ENCODE measurements at regions of chr19 and their contacts with region 1.

Region 1: DNA sequence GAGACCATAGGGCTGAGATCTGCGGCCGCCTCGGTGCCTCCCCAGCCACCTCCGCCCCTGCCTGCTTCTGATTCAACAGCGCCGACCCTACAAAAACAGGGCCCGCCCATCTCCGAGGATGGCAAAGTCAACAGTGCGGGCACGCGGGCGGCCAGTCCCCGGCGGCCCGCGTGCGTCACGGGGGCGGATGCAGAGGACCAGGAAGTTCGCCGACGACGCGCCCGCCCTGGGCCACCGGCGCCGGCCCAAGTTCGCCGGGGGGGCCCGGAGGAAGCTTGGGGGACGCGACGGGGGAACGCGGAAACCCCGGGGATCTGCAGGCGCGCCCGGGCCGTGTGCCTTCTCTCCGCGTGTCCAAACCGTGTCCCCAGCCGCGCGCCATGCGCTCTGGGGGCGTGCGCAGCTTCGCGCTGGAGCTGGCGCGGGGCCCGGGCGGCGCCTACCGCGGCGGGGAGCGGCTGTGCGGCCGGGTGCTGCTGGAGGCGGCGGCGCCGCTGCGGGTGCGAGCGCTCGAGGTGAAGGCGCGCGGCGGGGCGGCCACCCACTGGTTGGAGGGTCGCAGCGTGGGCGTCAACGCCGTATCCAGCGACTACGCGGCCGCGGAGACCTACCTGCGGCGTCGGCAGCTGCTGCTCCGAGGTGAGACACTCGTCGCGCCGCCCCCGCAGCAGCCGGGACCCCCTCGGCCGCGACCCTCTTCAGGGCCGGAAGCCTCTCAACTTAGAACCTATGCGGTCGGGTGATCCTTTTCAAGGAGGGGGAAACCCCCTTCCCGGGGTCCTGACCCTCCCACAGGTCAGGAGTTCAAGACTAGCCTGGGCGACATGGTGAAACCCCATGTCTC is 6.8 kb upstream of the ARRDC2 start:
- DNase-seq: peak; percentile 98
- ATAC-seq: peak; percentile 86
- H3K4me3 Mint-ChIP-seq: peak overlapping the region; percentile 90
- H3K27ac Mint-ChIP-seq: peak overlapping the region; percentile 98
- H3K4me1 Mint-ChIP-seq: peaks cover 18% of the 10 kb centered on the region
- H3K27me3 Mint-ChIP-seq: no peaks in the 10 kb centered on the region
- CTCF ChIP-seq: no peak

Region 2: GRCh38 chr19:17947815-17948513 is 53.2 kb before region 1 on chr19:
- CTCF ChIA-PET with region 1: interaction called, 90 read pairs
- POLR2A ChIA-PET with region 1: interaction called, 7 read pairs
- intact Hi-C with region 1: loop called (anchors 2 kb)
- DNase-seq: peak; percentile 95
- ATAC-seq: peak; percentile 68
- H3K4me3 Mint-ChIP-seq: peak overlapping the region; percentile 77
- H3K27ac Mint-ChIP-seq: no peak overlapping the region
- H3K4me1 Mint-ChIP-seq: peaks cover 53% of the 10 kb centered on the region
- H3K27me3 Mint-ChIP-seq: peaks cover 34% of the 10 kb centered on the region
- CTCF ChIP-seq: no peak

Region 3: DNA sequence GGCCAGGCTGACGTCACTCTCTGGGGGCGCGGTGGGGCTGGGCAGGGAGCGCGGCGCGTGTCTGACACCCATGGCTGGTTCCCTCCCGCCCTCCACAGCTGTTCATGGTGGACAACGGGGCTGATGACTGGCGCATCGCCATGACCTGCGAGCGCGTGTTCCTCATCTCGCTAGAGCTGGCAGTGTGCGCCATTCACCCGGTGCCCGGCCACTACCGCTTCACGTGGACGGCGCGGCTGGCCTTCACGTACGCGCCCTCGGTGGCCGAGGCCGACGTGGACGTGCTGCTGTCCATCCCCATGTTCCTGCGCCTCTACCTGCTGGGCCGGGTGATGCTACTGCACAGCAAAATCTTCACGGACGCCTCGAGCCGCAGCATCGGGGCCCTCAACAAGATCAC is 19.5 kb before region 1 on chr19:
- CTCF ChIA-PET with region 1: no interaction called
- POLR2A ChIA-PET with region 1: no interaction called
- intact Hi-C with region 1: no loop called
- DNase-seq: no peak
- ATAC-seq: no peak
- H3K4me3 Mint-ChIP-seq: no peak overlapping the region
- H3K27ac Mint-ChIP-seq: no peak overlapping the region
- H3K4me1 Mint-ChIP-seq: no peaks in the 10 kb centered on the region
- H3K27me3 Mint-ChIP-seq: peaks cover 8% of the 10 kb centered on the region
- CTCF ChIP-seq: no peak

Region 4: GRCh38 chr19:18107235-18107634 is 106.1 kb after region 1 on chr19:
- CTCF ChIA-PET with region 1: no interaction called
- POLR2A ChIA-PET with region 1: no interaction called
- intact Hi-C with region 1: no loop called
- DNase-seq: no peak
- ATAC-seq: no peak
- H3K4me3 Mint-ChIP-seq: no peak overlapping the region
- H3K27ac Mint-ChIP-seq: no peak overlapping the region
- H3K4me1 Mint-ChIP-seq: peaks cover 26% of the 10 kb centered on the region
- H3K27me3 Mint-ChIP-seq: no peaks in the 10 kb centered on the region
- CTCF ChIP-seq: no peak